ENCODE measurements at regions of chr15 and their contacts with region 1.

Region 1: GRCh38 chr15:59688841-59689625 is at the start of gene BNIP2:
- DNase-seq: peak; percentile 96
- H3K4me3 Mint-ChIP-seq: peak within 1 kb of the TSS; percentile 86
- H3K27ac Mint-ChIP-seq: peak within 1 kb of the TSS; percentile 98
- H3K4me1 Mint-ChIP-seq: peaks cover 18% of the 10 kb centered on the region
- H3K27me3 Mint-ChIP-seq: no peaks in the 10 kb centered on the region
- CTCF ChIP-seq: no peak
- total RNA-seq, gene BNIP2: 80.7 and 91.5 TPM in 2 replicates

Region 2: DNA sequence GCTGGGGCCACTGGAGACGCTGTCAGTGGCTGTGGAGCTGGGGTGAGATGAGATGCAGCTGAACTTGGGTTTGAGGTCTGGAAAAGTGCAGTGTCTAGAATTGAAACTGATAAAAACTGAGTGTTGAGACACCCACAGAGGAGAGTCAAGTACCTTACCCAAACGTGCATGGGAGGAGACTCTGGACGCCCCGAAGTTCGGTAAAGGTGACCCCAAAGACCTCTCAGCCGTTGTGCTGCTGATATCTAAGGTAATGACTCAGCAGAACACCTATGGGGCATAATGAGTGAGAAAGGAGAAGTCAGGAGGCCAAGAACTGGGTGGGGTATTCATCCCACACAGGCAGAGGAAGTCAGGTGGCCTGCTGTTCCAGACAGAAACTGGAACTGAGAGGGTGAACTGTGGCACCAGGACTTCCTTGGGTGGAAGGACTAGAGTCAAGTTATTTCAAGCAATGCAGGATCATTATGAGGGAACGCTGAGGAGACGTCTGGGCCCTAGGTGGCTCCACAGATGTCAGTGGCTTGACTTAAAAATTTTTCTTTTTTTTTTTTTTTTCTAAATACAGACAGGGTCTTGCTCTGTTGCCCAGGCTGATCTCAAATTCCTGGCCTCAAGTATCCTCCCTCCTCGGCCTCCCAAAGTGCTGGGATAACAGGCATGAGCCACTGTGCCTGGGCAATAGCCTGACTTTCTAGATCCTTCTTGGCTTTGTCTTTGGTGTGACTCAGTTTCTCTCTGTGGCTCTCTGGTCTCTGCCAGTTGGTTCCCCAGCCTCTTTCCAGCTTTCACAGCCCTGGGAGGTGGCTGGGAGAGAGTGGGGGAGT is 145.1 kb before region 1 on chr15:
- CTCF ChIA-PET with region 1: no interaction called
- POLR2A ChIA-PET with region 1: no interaction called
- intact Hi-C with region 1: no loop called
- DNase-seq: no peak
- H3K4me3 Mint-ChIP-seq: no peak overlapping the region
- H3K27ac Mint-ChIP-seq: no peak overlapping the region
- H3K4me1 Mint-ChIP-seq: peaks cover 15% of the 10 kb centered on the region
- H3K27me3 Mint-ChIP-seq: no peaks in the 10 kb centered on the region
- CTCF ChIP-seq: no peak

Region 3: GRCh38 chr15:59632714-59633113 is 56.3 kb before region 1 on chr15:
- CTCF ChIA-PET with region 1: no interaction called
- POLR2A ChIA-PET with region 1: no interaction called
- intact Hi-C with region 1: no loop called
- DNase-seq: peak; percentile 36
- H3K4me3 Mint-ChIP-seq: no peak overlapping the region
- H3K27ac Mint-ChIP-seq: no peak overlapping the region
- H3K4me1 Mint-ChIP-seq: no peaks in the 10 kb centered on the region
- H3K27me3 Mint-ChIP-seq: no peaks in the 10 kb centered on the region
- CTCF ChIP-seq: peak; percentile 34

Region 4: GRCh38 chr15:59656897-59657634 is 32.0 kb before region 1 on chr15 and contains the start of gene GTF2A2:
- CTCF ChIA-PET with region 1: no interaction called
- POLR2A ChIA-PET with region 1: interaction called, 10 read pairs
- intact Hi-C with region 1: no loop called
- DNase-seq: peak; percentile 96
- H3K4me3 Mint-ChIP-seq: no peak within 1 kb of the TSS
- H3K27ac Mint-ChIP-seq: peak within 1 kb of the TSS; percentile 84
- H3K4me1 Mint-ChIP-seq: no peaks in the 10 kb centered on the region
- H3K27me3 Mint-ChIP-seq: no peaks in the 10 kb centered on the region
- CTCF ChIP-seq: no peak
- total RNA-seq, gene GTF2A2: 152 and 165 TPM in 2 replicates

Region 5: DNA sequence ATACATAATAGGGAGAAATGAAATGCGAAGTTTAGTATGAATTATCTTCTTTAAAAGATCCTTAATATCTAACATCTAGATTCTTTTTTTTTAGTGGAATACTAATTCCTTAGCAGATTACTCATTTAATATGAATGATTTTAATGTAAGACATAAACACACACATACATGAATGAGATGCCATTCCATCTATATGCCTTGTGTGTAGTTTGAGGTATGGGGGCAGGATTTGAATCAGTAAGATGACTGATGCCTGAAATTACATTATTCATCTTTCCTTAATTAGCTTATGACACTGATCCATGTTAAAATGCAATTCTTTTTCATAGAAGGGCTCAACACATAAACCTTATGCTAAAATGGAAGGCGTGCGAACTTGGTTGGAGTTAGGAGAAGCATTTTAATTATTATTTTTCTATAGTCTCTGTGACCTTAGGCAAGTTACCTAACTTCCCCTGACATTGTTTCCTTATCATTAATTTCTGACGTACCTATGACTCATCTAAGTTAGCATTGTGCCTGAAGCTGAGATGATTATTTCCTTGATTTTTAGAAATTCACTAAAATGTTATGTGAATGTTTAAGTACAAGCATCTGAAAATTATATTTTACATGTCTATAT is 10.9 kb after region 1 on chr15:
- CTCF ChIA-PET with region 1: interaction called, 4 read pairs
- POLR2A ChIA-PET with region 1: interaction called, 26 read pairs
- intact Hi-C with region 1: no loop called
- DNase-seq: peak; percentile 43
- H3K4me3 Mint-ChIP-seq: no peak overlapping the region
- H3K27ac Mint-ChIP-seq: no peak overlapping the region
- H3K4me1 Mint-ChIP-seq: peaks cover 12% of the 10 kb centered on the region
- H3K27me3 Mint-ChIP-seq: no peaks in the 10 kb centered on the region
- CTCF ChIP-seq: no peak

Region 6: GRCh38 chr15:59725172-59725486 is 36.1 kb after region 1 on chr15:
- CTCF ChIA-PET with region 1: interaction called, 34 read pairs
- POLR2A ChIA-PET with region 1: interaction called, 25 read pairs
- intact Hi-C with region 1: loop called (anchors 1 kb)
- DNase-seq: no peak
- H3K4me3 Mint-ChIP-seq: no peak overlapping the region
- H3K27ac Mint-ChIP-seq: no peak overlapping the region
- H3K4me1 Mint-ChIP-seq: no peaks in the 10 kb centered on the region
- H3K27me3 Mint-ChIP-seq: peaks cover 13% of the 10 kb centered on the region
- CTCF ChIP-seq: no peak

Region 7: DNA sequence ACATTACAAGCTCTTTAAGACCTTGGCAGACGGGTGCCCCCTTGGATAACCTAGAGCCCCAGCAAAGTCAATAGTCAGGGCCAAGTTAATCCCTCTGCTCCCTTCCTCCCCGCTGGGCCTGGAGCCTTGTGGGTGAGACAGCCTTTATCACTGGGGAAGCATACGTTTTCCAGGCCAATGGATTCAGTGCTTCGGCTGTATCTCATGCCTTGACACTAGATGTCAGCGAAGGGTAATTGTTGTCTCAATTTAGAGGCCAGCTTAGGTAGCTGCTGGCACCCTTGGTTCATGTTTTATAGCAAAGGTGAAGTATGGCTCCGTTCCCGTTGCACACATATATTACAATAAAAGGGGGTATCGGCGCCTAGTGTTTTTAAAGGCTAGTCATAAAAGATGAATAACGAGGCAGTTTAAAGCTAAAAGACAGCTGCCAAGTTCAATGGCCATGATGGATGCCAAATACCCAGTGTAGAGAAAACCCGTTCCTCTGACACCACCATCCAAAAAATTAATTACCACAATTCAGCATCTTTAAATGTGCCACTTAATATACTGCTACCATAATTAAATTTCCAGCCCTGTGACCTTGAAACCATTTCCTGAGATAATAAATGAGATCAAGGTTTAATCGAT is 52.4 kb after region 1 on chr15:
- CTCF ChIA-PET with region 1: interaction called, 19 read pairs
- POLR2A ChIA-PET with region 1: interaction called, 3 read pairs
- intact Hi-C with region 1: no loop called
- DNase-seq: peak; percentile 57
- H3K4me3 Mint-ChIP-seq: no peak overlapping the region
- H3K27ac Mint-ChIP-seq: no peak overlapping the region
- H3K4me1 Mint-ChIP-seq: no peaks in the 10 kb centered on the region
- H3K27me3 Mint-ChIP-seq: no peaks in the 10 kb centered on the region
- CTCF ChIP-seq: peak; percentile 43

Region 8: GRCh38 chr15:59751552-59752413 is 62.8 kb after region 1 on chr15:
- CTCF ChIA-PET with region 1: interaction called, 16 read pairs
- POLR2A ChIA-PET with region 1: no interaction called
- intact Hi-C with region 1: loop called (anchors 2 kb)
- DNase-seq: peak; percentile 54
- H3K4me3 Mint-ChIP-seq: no peak overlapping the region
- H3K27ac Mint-ChIP-seq: no peak overlapping the region
- H3K4me1 Mint-ChIP-seq: no peaks in the 10 kb centered on the region
- H3K27me3 Mint-ChIP-seq: peaks cover 13% of the 10 kb centered on the region
- CTCF ChIP-seq: peak; percentile 73

Region 9: GRCh38 chr15:59834528-59834927 is 145.5 kb after region 1 on chr15:
- CTCF ChIA-PET with region 1: no interaction called
- POLR2A ChIA-PET with region 1: no interaction called
- intact Hi-C with region 1: no loop called
- DNase-seq: no peak
- H3K4me3 Mint-ChIP-seq: no peak overlapping the region
- H3K27ac Mint-ChIP-seq: no peak overlapping the region
- H3K4me1 Mint-ChIP-seq: peaks cover 14% of the 10 kb centered on the region
- H3K27me3 Mint-ChIP-seq: no peaks in the 10 kb centered on the region
- CTCF ChIP-seq: no peak

Region 10: DNA sequence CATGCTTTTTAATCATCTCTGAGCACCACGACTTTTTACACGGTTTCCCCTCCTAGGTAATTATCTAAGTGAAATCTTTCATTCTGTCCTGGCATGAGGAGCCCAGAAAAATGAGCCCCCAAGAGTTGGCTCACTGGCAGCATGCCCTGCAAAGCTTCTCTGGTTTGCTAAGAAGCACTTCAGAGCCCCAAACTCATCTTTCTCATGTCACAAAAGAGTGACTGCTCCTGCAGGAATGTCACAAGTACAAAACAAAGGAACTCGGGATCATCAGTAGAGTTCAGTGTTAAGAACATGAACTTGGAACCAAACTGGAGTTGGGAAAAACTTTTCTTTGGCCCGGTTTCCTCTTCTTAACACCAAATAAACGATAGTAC is 439.0 kb after region 1 on chr15:
- CTCF ChIA-PET with region 1: no interaction called
- POLR2A ChIA-PET with region 1: interaction called, 4 read pairs
- intact Hi-C with region 1: loop called (anchors 1 kb)
- DNase-seq: no peak
- H3K4me3 Mint-ChIP-seq: peak overlapping the region; percentile 85
- H3K27ac Mint-ChIP-seq: peak overlapping the region; percentile 94
- H3K4me1 Mint-ChIP-seq: peaks cover 18% of the 10 kb centered on the region
- H3K27me3 Mint-ChIP-seq: no peaks in the 10 kb centered on the region
- CTCF ChIP-seq: no peak

Region 11: DNA sequence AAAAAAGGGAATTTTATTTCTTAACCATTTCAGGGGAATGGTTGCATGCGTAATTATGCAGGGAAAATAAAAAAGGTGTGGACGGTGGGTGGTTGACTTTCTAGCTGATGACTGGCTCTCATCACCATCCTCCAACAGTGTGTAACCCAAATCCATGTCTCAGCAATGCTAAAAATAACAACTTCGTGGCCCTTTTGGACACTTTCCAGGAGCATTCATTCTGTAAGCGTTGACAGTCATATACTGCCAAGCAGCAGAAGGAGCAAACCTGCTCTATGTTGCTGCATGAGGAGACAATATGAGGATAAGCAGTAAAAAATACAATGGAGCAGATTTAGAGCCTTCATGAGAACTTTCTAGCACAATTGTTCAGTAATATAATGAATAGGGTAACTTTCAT is 519.7 kb after region 1 on chr15:
- CTCF ChIA-PET with region 1: no interaction called
- POLR2A ChIA-PET with region 1: no interaction called
- intact Hi-C with region 1: no loop called
- DNase-seq: peak; percentile 58
- H3K4me3 Mint-ChIP-seq: no peak overlapping the region
- H3K27ac Mint-ChIP-seq: no peak overlapping the region
- H3K4me1 Mint-ChIP-seq: peaks cover 7% of the 10 kb centered on the region
- H3K27me3 Mint-ChIP-seq: peaks cover 15% of the 10 kb centered on the region
- CTCF ChIP-seq: no peak

Measured in MCF 10A (cell line).